Naive thymus-derived CD4-positive, alpha-beta T cell (primary cell): ENCODE measurements at regions of chr3 and their contacts with region 1.

Region 1: GRCh38 chr3:59998058-59998457 is 948.2 kb upstream of the CFAP20DC start:
- DNase-seq: no peak
- ATAC-seq: no peak
- H3K4me3 ChIP-seq: no peak overlapping the region
- H3K4me3 Mint-ChIP-seq: peak overlapping the region in 3 of 10 donors; percentile 13 to 52 (median 21)
- H3K27ac ChIP-seq: no peak overlapping the region
- H3K27ac Mint-ChIP-seq: peak overlapping the region in 7 of 9 donors; percentile 19 to 78 (median 67)
- H3K4me1 ChIP-seq: peaks cover 0 to 82% of the 10 kb centered on the region in 2 donors
- H3K4me1 Mint-ChIP-seq: peaks cover 30 to 98% (median 89%) of the 10 kb centered on the region in 7 donors
- H3K27me3 ChIP-seq: no peaks in the 10 kb centered on the region
- H3K27me3 Mint-ChIP-seq: no peaks in the 10 kb centered on the region

Region 2: GRCh38 chr3:60431599-60431958 is 433.5 kb after region 1 on chr3:
- CTCF ChIA-PET with region 1: no interaction called
- POLR2A ChIA-PET with region 1: no interaction called
- intact Hi-C with region 1: loop called in 1 of 2 experiments (anchors 2 kb)
- DNase-seq: peak in 4 of 9 donors; percentile 13 to 23 (median 19)
- ATAC-seq: peak; percentile 38
- H3K4me3 ChIP-seq: no peak overlapping the region
- H3K4me3 Mint-ChIP-seq: peak overlapping the region in 4 of 10 donors; percentile 22 to 59 (median 46)
- H3K27ac ChIP-seq: no peak overlapping the region
- H3K27ac Mint-ChIP-seq: peak overlapping the region in 2 of 9 donors; percentile 21 to 60
- H3K4me1 ChIP-seq: no peaks in the 10 kb centered on the region
- H3K4me1 Mint-ChIP-seq: peaks cover 0 to 34% (median 27%) of the 10 kb centered on the region in 7 donors
- H3K27me3 ChIP-seq: peaks cover 0 to 5% of the 10 kb centered on the region in 2 donors
- H3K27me3 Mint-ChIP-seq: no peaks in the 10 kb centered on the region

Region 3: GRCh38 chr3:60445446-60445845 is 447.4 kb after region 1 on chr3:
- CTCF ChIA-PET with region 1: no interaction called
- POLR2A ChIA-PET with region 1: no interaction called
- intact Hi-C with region 1: no loop called
- DNase-seq: no peak
- ATAC-seq: no peak
- H3K4me3 ChIP-seq: no peak overlapping the region
- H3K4me3 Mint-ChIP-seq: no peak overlapping the region
- H3K27ac ChIP-seq: no peak overlapping the region
- H3K27ac Mint-ChIP-seq: no peak overlapping the region
- H3K4me1 ChIP-seq: no peaks in the 10 kb centered on the region
- H3K4me1 Mint-ChIP-seq: peaks cover 0 to 15% (median 9%) of the 10 kb centered on the region in 7 donors
- H3K27me3 ChIP-seq: no peaks in the 10 kb centered on the region
- H3K27me3 Mint-ChIP-seq: no peaks in the 10 kb centered on the region

Region 4: DNA sequence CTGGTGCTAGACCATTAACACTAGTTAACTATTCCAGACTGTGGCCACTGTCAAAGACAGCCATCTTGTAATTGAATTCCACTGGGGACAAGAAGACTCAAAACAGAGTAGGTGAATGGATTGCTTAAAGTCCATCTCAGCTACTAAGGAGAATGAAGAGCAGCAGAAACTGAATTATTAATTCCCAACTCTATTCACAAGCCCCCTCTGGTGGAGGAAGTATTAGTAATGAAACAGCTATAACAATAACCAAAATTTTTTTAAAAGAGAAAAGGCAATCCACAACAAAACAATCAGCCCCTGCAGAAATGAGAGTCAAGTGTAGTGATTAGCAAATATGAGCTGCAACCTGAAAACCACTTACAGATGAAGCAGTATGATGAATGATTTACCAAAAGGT is 950.4 kb after region 1 on chr3:
- CTCF ChIA-PET with region 1: no interaction called
- POLR2A ChIA-PET with region 1: no interaction called
- intact Hi-C with region 1: loop called in 1 of 2 experiments (anchors 5 kb)
- DNase-seq: peak in 3 of 9 donors; percentile 7 to 16 (median 11)
- ATAC-seq: no peak
- H3K4me3 ChIP-seq: no peak overlapping the region
- H3K4me3 Mint-ChIP-seq: no peak overlapping the region
- H3K27ac ChIP-seq: no peak overlapping the region
- H3K27ac Mint-ChIP-seq: peak overlapping the region in 1 of 9 donors; percentile 53
- H3K4me1 ChIP-seq: no peaks in the 10 kb centered on the region
- H3K4me1 Mint-ChIP-seq: peaks cover 0 to 5% (median 0%) of the 10 kb centered on the region in 7 donors
- H3K27me3 ChIP-seq: no peaks in the 10 kb centered on the region
- H3K27me3 Mint-ChIP-seq: no peaks in the 10 kb centered on the region

Region 5: GRCh38 chr3:61381745-61382392 is 1383.8 kb after region 1 on chr3:
- CTCF ChIA-PET with region 1: interaction called, 3 read pairs
- POLR2A ChIA-PET with region 1: no interaction called
- intact Hi-C with region 1: loop called in 1 of 2 experiments (anchors 10 kb)
- DNase-seq: peak in 6 of 9 donors; percentile 32 to 60 (median 44)
- ATAC-seq: peak; percentile 63
- H3K4me3 ChIP-seq: no peak overlapping the region
- H3K4me3 Mint-ChIP-seq: no peak overlapping the region
- H3K27ac ChIP-seq: no peak overlapping the region
- H3K27ac Mint-ChIP-seq: no peak overlapping the region
- H3K4me1 ChIP-seq: no peaks in the 10 kb centered on the region
- H3K4me1 Mint-ChIP-seq: peaks cover 3 to 6% (median 5%) of the 10 kb centered on the region in 7 donors
- H3K27me3 ChIP-seq: no peaks in the 10 kb centered on the region
- H3K27me3 Mint-ChIP-seq: peaks cover 14 to 47% (median 27%) of the 10 kb centered on the region in 5 donors